CD8-positive, alpha-beta T cell (primary cell): ENCODE measurements at regions of chr18 and their contacts with region 1.

Region 1: GRCh38 chr18:65938592-65939372 is 188.0 kb downstream of the CDH7 start:
- DNase-seq: no peak
- ATAC-seq: no peak
- H3K4me3 ChIP-seq: no peak overlapping the region
- H3K4me3 Mint-ChIP-seq: no peak overlapping the region
- H3K27ac ChIP-seq: no peak overlapping the region
- H3K27ac Mint-ChIP-seq: no peak overlapping the region
- H3K4me1 ChIP-seq: no peaks in the 10 kb centered on the region
- H3K4me1 Mint-ChIP-seq: no peaks in the 10 kb centered on the region
- H3K27me3 ChIP-seq: no peaks in the 10 kb centered on the region
- H3K27me3 Mint-ChIP-seq: no peaks in the 10 kb centered on the region
- CTCF ChIP-seq: no peak

Region 2: GRCh38 chr18:65846107-65846506 is 92.7 kb before region 1 on chr18:
- CTCF ChIA-PET with region 1: no interaction called
- POLR2A ChIA-PET with region 1: no interaction called
- intact Hi-C with region 1: no loop called
- DNase-seq: no peak
- ATAC-seq: no peak
- H3K4me3 ChIP-seq: no peak overlapping the region
- H3K4me3 Mint-ChIP-seq: no peak overlapping the region
- H3K27ac ChIP-seq: no peak overlapping the region
- H3K27ac Mint-ChIP-seq: no peak overlapping the region
- H3K4me1 ChIP-seq: no peaks in the 10 kb centered on the region
- H3K4me1 Mint-ChIP-seq: no peaks in the 10 kb centered on the region
- H3K27me3 ChIP-seq: no peaks in the 10 kb centered on the region
- H3K27me3 Mint-ChIP-seq: no peaks in the 10 kb centered on the region
- CTCF ChIP-seq: no peak

Region 3: DNA sequence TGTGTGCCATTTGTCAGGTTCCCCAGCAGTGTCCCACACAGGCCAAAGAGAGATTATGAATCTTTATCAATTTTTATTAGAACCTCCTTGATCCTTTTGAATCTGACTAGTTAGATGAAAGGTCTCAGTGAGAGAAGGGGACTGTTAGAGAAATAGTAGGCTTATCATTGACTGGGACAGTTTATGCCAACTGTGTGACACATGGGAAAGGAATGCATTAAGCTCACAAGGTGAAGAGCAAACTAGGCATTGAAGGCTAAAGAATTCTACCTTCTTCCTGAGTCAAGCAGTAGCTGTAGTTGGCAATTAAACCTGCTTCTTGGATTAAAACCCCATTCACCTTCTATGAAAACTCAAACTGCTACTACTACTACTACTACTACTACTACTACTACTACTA is 1054.7 kb after region 1 on chr18:
- CTCF ChIA-PET with region 1: no interaction called
- POLR2A ChIA-PET with region 1: no interaction called
- intact Hi-C with region 1: loop called in 1 of 2 experiments (anchors 5 kb)
- DNase-seq: no peak
- ATAC-seq: no peak
- H3K4me3 ChIP-seq: no peak overlapping the region
- H3K4me3 Mint-ChIP-seq: no peak overlapping the region
- H3K27ac ChIP-seq: no peak overlapping the region
- H3K27ac Mint-ChIP-seq: no peak overlapping the region
- H3K4me1 ChIP-seq: no peaks in the 10 kb centered on the region
- H3K4me1 Mint-ChIP-seq: no peaks in the 10 kb centered on the region
- H3K27me3 ChIP-seq: no peaks in the 10 kb centered on the region
- H3K27me3 Mint-ChIP-seq: no peaks in the 10 kb centered on the region
- CTCF ChIP-seq: no peak